Activated CD8-positive, alpha-beta T cell treated with anti-CD3 and anti-CD28 coated beads for 36 hours (primary cell): ENCODE measurements at regions of chr5 and their contacts with region 1.

Region 1: GRCh38 chr5:159156426-159157238 is 52.7 kb downstream of the RNF145 start:
- DNase-seq: peak; percentile 32
- ATAC-seq: peak; percentile 72
- H3K4me3 Mint-ChIP-seq: no peak overlapping the region
- H3K27ac Mint-ChIP-seq: peak overlapping the region; percentile 63
- H3K4me1 Mint-ChIP-seq: peaks cover 42% of the 10 kb centered on the region
- H3K27me3 Mint-ChIP-seq: no peaks in the 10 kb centered on the region
- CTCF ChIP-seq: peak; percentile 95

Region 2: GRCh38 chr5:159061179-159061796 is 95.3 kb before region 1 on chr5:
- CTCF ChIA-PET with region 1: no interaction called
- POLR2A ChIA-PET with region 1: no interaction called
- intact Hi-C with region 1: no loop called
- DNase-seq: no peak
- ATAC-seq: no peak
- H3K4me3 Mint-ChIP-seq: no peak overlapping the region
- H3K27ac Mint-ChIP-seq: no peak overlapping the region
- H3K4me1 Mint-ChIP-seq: no peaks in the 10 kb centered on the region
- H3K27me3 Mint-ChIP-seq: peaks cover 16% of the 10 kb centered on the region
- CTCF ChIP-seq: no peak

Region 3: DNA sequence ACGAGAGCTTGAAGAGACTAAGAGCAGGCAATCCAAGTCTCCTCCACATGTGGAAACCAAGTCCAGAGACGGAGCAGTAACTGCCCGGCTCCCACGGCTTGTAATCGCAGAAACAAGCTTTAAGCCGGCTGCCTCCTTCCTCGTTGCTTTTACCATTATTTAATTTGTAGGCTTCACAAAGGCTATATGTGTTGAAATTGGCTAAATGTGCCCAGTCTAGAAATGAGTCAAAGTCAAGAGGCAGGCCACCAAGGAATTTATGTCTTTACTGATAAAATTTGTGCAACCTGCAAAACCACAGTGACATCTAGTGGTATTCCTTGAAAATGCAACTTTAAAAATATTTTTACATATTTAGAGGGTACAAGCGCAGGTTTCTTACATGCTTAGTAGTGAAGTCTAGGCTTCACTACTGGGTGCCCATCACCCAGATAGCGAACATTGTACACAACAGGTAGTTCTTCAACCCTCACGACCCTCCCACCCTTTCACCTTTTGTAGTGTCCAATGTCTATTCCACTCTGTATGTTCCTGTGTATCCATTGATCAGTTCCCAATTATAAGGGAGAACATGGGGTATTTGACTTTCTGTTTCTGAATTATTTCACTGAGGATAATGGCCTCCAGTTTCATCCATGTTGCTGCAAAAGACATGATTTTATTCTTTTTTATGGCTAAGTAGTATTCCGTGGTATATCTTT is 23.4 kb before region 1 on chr5:
- CTCF ChIA-PET with region 1: interaction called, 11 read pairs
- POLR2A ChIA-PET with region 1: no interaction called
- intact Hi-C with region 1: no loop called
- DNase-seq: no peak
- ATAC-seq: peak; percentile 60
- H3K4me3 Mint-ChIP-seq: no peak overlapping the region
- H3K27ac Mint-ChIP-seq: no peak overlapping the region
- H3K4me1 Mint-ChIP-seq: no peaks in the 10 kb centered on the region
- H3K27me3 Mint-ChIP-seq: peaks cover 1% of the 10 kb centered on the region
- CTCF ChIP-seq: peak; percentile 82

Region 4: DNA sequence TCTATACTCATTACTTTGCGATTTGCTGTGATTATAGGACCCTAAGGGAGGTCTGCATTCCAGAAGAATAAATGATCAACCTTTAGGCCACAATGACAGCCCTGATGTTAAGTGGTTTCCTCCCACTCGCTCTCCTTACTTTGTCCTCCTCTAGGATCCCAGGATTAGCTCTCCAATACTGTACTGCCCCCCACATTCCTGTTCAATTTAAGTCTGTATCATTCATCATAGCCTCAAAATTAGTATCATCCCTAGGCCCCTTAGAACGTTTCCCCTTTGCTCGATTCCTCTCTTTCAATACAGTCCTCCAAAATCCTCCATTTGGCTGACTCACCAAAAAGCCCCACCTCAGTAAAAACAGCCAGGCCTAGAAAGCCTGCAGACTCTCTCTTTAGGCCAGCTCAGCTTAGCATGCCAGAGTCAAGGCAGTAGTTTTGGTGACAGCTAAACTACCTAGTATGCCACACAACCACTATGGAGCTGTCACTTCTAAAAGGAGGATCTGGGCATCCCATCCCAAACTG is 28.3 kb after region 1 on chr5:
- CTCF ChIA-PET with region 1: interaction called, 14 read pairs
- POLR2A ChIA-PET with region 1: no interaction called
- intact Hi-C with region 1: no loop called
- DNase-seq: peak; percentile 61
- ATAC-seq: peak; percentile 87
- H3K4me3 Mint-ChIP-seq: no peak overlapping the region
- H3K27ac Mint-ChIP-seq: peak overlapping the region; percentile 84
- H3K4me1 Mint-ChIP-seq: peaks cover 74% of the 10 kb centered on the region
- H3K27me3 Mint-ChIP-seq: no peaks in the 10 kb centered on the region
- CTCF ChIP-seq: no peak

Region 5: GRCh38 chr5:159214486-159215271 is 58.0 kb after region 1 on chr5:
- CTCF ChIA-PET with region 1: interaction called, 14 read pairs
- POLR2A ChIA-PET with region 1: no interaction called
- intact Hi-C with region 1: loop called (anchors 5 kb)
- DNase-seq: no peak
- ATAC-seq: no peak
- H3K4me3 Mint-ChIP-seq: no peak overlapping the region
- H3K27ac Mint-ChIP-seq: no peak overlapping the region
- H3K4me1 Mint-ChIP-seq: peaks cover 35% of the 10 kb centered on the region
- H3K27me3 Mint-ChIP-seq: no peaks in the 10 kb centered on the region
- CTCF ChIP-seq: no peak

Region 6: DNA sequence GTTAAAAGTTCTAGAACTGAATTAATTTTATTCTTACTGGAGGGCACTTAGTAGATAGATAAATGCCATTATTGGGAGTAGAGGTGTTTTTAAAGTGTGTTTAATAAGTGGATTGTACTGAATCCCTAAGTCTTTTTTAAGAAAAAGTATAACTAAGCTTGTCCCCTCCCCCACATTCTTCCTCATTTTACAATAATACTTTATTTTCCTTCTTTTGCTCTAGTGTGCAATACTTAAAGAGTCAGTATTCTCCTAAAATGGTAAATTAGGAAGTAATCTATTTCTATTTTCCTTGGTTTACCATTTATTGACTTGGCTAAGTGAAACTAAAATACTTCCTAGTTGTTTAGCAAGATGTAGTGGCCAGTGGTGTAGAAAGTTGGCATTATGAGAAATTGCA is 118.0 kb after region 1 on chr5:
- CTCF ChIA-PET with region 1: interaction called, 11 read pairs
- POLR2A ChIA-PET with region 1: no interaction called
- intact Hi-C with region 1: no loop called
- DNase-seq: no peak
- ATAC-seq: no peak
- H3K4me3 Mint-ChIP-seq: no peak overlapping the region
- H3K27ac Mint-ChIP-seq: no peak overlapping the region
- H3K4me1 Mint-ChIP-seq: peaks cover 22% of the 10 kb centered on the region
- H3K27me3 Mint-ChIP-seq: no peaks in the 10 kb centered on the region
- CTCF ChIP-seq: no peak

Region 7: DNA sequence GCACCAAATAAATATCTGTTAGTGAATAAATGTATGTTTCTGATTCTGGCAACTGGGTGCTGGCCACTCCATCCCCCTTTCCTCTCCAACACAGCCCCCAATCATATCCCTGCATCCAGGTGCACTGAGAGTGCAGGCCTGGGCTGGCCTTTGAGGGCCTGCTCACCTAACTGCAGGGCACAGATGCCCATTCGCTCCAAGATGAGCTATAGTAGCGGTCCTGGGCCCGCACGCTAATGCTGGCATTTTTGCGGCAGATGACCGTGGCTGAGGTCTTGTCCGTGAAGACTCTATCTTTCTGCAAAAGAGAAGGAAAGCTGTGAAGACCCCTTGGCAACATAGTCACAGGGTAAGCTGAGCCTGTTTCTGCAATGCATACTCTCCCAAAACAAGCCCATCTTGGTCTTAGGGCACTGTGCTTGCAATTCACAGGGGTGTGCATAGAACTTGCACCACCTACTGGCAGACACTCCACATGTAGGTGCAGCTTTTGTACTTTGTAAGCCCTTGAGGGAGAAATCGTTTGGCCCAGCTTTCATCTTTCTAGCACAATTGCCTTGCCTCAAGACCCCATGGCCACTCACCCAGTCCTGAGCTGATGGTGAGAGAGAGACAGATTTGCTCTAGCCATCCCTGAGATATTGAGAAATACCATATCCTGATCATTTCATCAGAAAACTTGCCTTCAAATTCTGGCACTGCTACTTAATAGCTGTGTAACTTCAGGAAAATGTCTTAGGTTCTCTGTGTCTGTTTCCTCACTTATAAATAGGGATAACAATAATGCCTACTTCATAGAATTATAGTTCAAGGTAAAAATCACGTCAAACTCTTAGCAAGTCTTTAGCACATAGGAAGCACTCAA is 160.1 kb after region 1 on chr5:
- CTCF ChIA-PET with region 1: interaction called, 66 read pairs
- POLR2A ChIA-PET with region 1: no interaction called
- intact Hi-C with region 1: loop called (anchors 1 kb)
- DNase-seq: peak; percentile 71
- ATAC-seq: peak; percentile 84
- H3K4me3 Mint-ChIP-seq: no peak overlapping the region
- H3K27ac Mint-ChIP-seq: no peak overlapping the region
- H3K4me1 Mint-ChIP-seq: no peaks in the 10 kb centered on the region
- H3K27me3 Mint-ChIP-seq: peaks cover 3% of the 10 kb centered on the region
- CTCF ChIP-seq: peak; percentile 50